Calu3 (cell line): ENCODE measurements at regions of chr10 and their contacts with region 1.

Region 1: DNA sequence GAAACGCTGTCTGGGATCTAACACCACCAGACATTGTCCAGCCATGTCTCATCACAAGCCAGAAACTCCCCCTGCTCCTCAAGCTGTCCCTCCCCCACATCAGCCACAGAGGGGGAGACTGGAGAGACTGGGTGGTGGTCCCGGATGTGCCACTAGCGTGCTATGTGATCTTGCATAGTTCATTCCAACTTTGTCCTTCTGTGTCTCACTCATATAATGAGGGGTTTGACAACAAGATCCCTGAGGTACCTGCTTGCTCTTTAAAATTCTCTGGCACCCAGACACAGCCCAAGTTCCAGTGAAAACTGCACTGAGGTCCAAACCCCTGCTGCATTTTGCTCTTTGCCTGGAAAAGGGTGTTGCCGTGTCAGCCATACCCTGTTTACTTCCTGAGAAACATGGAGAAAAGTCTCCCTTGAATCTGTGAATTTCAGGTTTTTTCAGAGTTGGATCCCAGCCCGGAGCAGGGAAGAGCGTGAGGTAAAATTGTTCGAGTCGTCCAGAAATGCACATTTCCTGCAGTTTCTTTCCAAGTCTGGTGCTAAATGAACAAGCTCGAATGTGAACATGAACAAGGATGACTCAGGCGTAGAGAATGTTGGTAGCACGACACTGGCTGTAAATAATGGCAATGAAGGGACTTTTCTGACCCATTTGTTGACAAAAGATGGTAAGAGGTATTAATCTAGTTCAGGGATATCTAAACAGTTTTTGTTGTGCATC is 156.5 kb downstream of the CCDC3 start:
- DNase-seq: peak; percentile 11
- H3K4me3 Mint-ChIP-seq: no peak overlapping the region
- H3K27ac Mint-ChIP-seq: no peak overlapping the region
- H3K4me1 Mint-ChIP-seq: peaks cover 9% of the 10 kb centered on the region
- H3K27me3 Mint-ChIP-seq: peaks cover 57% of the 10 kb centered on the region
- CTCF ChIP-seq: no peak

Region 2: GRCh38 chr10:12782537-12782936 is 62.4 kb before region 1 on chr10:
- CTCF ChIA-PET with region 1: no interaction called
- intact Hi-C with region 1: loop called (anchors 10 kb)
- DNase-seq: peak; percentile 43
- H3K4me3 Mint-ChIP-seq: no peak overlapping the region
- H3K27ac Mint-ChIP-seq: no peak overlapping the region
- H3K4me1 Mint-ChIP-seq: no peaks in the 10 kb centered on the region
- H3K27me3 Mint-ChIP-seq: peaks cover 95% of the 10 kb centered on the region
- CTCF ChIP-seq: peak; percentile 42

Region 3: GRCh38 chr10:12834116-12834515 is 10.9 kb before region 1 on chr10:
- CTCF ChIA-PET with region 1: interaction called, 10 read pairs
- intact Hi-C with region 1: no loop called
- DNase-seq: no peak
- H3K4me3 Mint-ChIP-seq: no peak overlapping the region
- H3K27ac Mint-ChIP-seq: no peak overlapping the region
- H3K4me1 Mint-ChIP-seq: no peaks in the 10 kb centered on the region
- H3K27me3 Mint-ChIP-seq: peaks cover 92% of the 10 kb centered on the region
- CTCF ChIP-seq: no peak